ENCODE measurements at regions of chr4 and their contacts with region 1.

Region 1: GRCh38 chr4:82360298-82361177 is 13.3 kb downstream of the HNRNPD start:
- DNase-seq: no peak
- H3K4me3 ChIP-seq: no peak overlapping the region
- H3K27ac ChIP-seq: no peak overlapping the region; the same call in 1 of the 2 replicates
- H3K4me1 ChIP-seq: no peaks in the 10 kb centered on the region; a peak in 1 of 7 replicates
- H3K27me3 ChIP-seq: peaks cover 0 to 1% (median 0%) of the 10 kb centered on the region in 4 experiments; a peak in 1 of 7 replicates
- CTCF ChIP-seq: peak in 1 of 3 experiments; percentile 56; a peak in 2 of 4 replicates
- EP300 ChIP-seq: no peak
- POLR2A ChIP-seq: no peak
- RAD21 ChIP-seq: peak; percentile 45 to 56

Region 2: DNA sequence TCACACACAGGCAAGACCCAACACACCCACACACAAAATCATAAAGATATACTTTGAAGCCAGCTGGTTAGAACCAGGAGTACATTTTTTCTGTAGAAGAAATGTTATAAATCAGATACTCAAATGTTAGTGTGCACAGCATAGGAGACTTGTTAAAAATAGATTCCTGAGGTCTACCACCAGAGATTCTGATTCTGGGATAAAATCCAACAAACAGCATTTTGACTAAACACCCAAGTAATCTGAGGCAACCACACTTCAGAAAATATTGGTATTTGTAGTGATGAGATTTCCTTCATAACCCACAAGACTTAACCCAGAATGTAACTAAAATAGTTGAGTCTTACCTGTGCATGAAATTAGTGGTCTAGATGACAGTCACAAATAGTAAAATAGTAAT is 288.6 kb before region 1 on chr4:
- CTCF ChIA-PET with region 1: no interaction called
- POLR2A ChIA-PET with region 1: no interaction called
- DNase-seq: no peak
- H3K4me3 ChIP-seq: no peak overlapping the region
- H3K27ac ChIP-seq: no peak overlapping the region
- H3K4me1 ChIP-seq: peaks cover 0 to 2% (median 0%) of the 10 kb centered on the region in 4 experiments; a peak in 1 of 7 replicates
- H3K27me3 ChIP-seq: no peaks in the 10 kb centered on the region
- CTCF ChIP-seq: no peak
- EP300 ChIP-seq: no peak
- POLR2A ChIP-seq: no peak
- RAD21 ChIP-seq: no peak

Region 3: GRCh38 chr4:82181789-82182188 is 178.7 kb before region 1 on chr4:
- CTCF ChIA-PET with region 1: no interaction called
- POLR2A ChIA-PET with region 1: no interaction called
- DNase-seq: no peak
- H3K4me3 ChIP-seq: no peak overlapping the region
- H3K27ac ChIP-seq: no peak overlapping the region
- H3K4me1 ChIP-seq: no peaks in the 10 kb centered on the region; a peak in 1 of 7 replicates
- H3K27me3 ChIP-seq: no peaks in the 10 kb centered on the region
- CTCF ChIP-seq: no peak
- EP300 ChIP-seq: no peak
- POLR2A ChIP-seq: no peak
- RAD21 ChIP-seq: no peak

Region 4: GRCh38 chr4:82346126-82346525 is 14.4 kb before region 1 on chr4:
- CTCF ChIA-PET with region 1: interaction called, 13 read pairs
- POLR2A ChIA-PET with region 1: interaction called, 17 read pairs
- DNase-seq: no peak
- H3K4me3 ChIP-seq: no peak overlapping the region
- H3K27ac ChIP-seq: no peak overlapping the region
- H3K4me1 ChIP-seq: 0 out of 7 replicates have a peak, but pooled peaks cover 0 to 2% (median 0%) of the 10 kb centered on the region in 4 experiments
- H3K27me3 ChIP-seq: no peaks in the 10 kb centered on the region
- CTCF ChIP-seq: no peak
- EP300 ChIP-seq: no peak
- POLR2A ChIP-seq: no peak
- RAD21 ChIP-seq: no peak

Region 5: DNA sequence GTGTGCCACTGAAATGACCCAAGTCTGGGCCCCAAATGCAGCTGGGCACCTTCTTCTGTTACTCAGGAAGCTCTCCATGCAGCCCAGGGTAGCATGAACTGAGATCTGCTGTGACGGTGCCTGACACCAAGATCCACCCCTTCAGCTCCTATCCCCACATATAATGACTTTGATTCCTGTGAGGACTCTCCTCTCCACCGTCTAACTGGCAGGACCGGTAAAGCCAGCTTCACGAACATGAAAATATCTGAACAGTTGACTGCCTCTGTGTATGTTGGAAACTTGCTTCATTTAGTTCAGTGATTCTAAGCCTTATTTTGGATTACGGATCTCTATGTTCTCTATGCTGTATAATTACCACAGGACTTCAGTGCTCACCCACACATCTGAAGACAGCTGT is 316.8 kb after region 1 on chr4:
- CTCF ChIA-PET with region 1: no interaction called
- POLR2A ChIA-PET with region 1: no interaction called
- DNase-seq: no peak
- H3K4me3 ChIP-seq: no peak overlapping the region
- H3K27ac ChIP-seq: no peak overlapping the region
- H3K4me1 ChIP-seq: no peaks in the 10 kb centered on the region; a peak in 1 of 7 replicates
- H3K27me3 ChIP-seq: no peaks in the 10 kb centered on the region; a peak in 1 of 7 replicates
- CTCF ChIP-seq: no peak
- EP300 ChIP-seq: no peak
- POLR2A ChIP-seq: no peak
- RAD21 ChIP-seq: no peak

Measured in H1 (cell line).